H1 (cell line): ENCODE measurements at regions of chr1 and their contacts with region 1.

Region 1: GRCh38 chr1:172713466-172713865 is 54.6 kb downstream of the FASLG start:
- DNase-seq: no peak
- H3K4me3 ChIP-seq: no peak overlapping the region
- H3K27ac ChIP-seq: no peak overlapping the region
- H3K4me1 ChIP-seq: peaks cover 0 to 5% (median 0%) of the 10 kb centered on the region in 4 experiments; a peak in 1 of 7 replicates
- H3K27me3 ChIP-seq: no peaks in the 10 kb centered on the region
- CTCF ChIP-seq: no peak
- EP300 ChIP-seq: no peak
- POLR2A ChIP-seq: no peak
- RAD21 ChIP-seq: no peak

Region 2: GRCh38 chr1:172609528-172609927 is 103.9 kb before region 1 on chr1:
- CTCF ChIA-PET with region 1: interaction called, 96 read pairs
- POLR2A ChIA-PET with region 1: no interaction called
- DNase-seq: no peak
- H3K4me3 ChIP-seq: no peak overlapping the region
- H3K27ac ChIP-seq: no peak overlapping the region
- H3K4me1 ChIP-seq: no peaks in the 10 kb centered on the region
- H3K27me3 ChIP-seq: no peaks in the 10 kb centered on the region
- CTCF ChIP-seq: peak in 2 of 3 experiments; percentile 20 to 27; a peak in 2 of 4 replicates
- EP300 ChIP-seq: no peak
- POLR2A ChIP-seq: no peak
- RAD21 ChIP-seq: peak; percentile 28 to 43

Region 3: DNA sequence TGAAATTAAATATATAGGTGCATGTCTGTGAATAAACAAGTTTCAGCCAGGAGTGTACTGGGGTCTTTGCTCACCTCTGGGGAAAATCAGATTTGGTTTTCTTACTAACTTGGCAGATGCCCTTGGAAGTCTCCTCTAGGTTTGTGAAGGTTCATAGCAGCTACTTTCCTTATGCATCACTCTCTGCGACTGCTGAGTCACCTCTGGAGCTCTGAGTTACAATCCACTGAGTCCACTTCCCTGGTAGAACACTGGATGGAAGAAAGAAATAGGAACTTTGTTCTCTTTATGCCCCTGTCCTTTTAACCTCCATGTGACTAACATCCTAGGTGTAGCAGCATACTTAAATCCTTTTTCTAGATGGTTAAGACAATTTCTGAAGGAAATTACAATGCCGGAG is 58.9 kb before region 1 on chr1:
- CTCF ChIA-PET with region 1: no interaction called
- POLR2A ChIA-PET with region 1: no interaction called
- DNase-seq: no peak
- H3K4me3 ChIP-seq: no peak overlapping the region
- H3K27ac ChIP-seq: no peak overlapping the region
- H3K4me1 ChIP-seq: no peaks in the 10 kb centered on the region
- H3K27me3 ChIP-seq: no peaks in the 10 kb centered on the region
- CTCF ChIP-seq: no peak
- EP300 ChIP-seq: no peak
- POLR2A ChIP-seq: no peak
- RAD21 ChIP-seq: no peak

Region 4: GRCh38 chr1:172674831-172675613 is 38.4 kb before region 1 on chr1:
- CTCF ChIA-PET with region 1: no interaction called
- POLR2A ChIA-PET with region 1: no interaction called
- DNase-seq: no peak
- H3K4me3 ChIP-seq: no peak overlapping the region
- H3K27ac ChIP-seq: no peak overlapping the region
- H3K4me1 ChIP-seq: peaks cover 0 to 10% (median 0%) of the 10 kb centered on the region in 4 experiments; a peak in 1 of 7 replicates
- H3K27me3 ChIP-seq: no peaks in the 10 kb centered on the region
- CTCF ChIP-seq: no peak
- EP300 ChIP-seq: no peak
- POLR2A ChIP-seq: no peak
- RAD21 ChIP-seq: no peak

Region 5: DNA sequence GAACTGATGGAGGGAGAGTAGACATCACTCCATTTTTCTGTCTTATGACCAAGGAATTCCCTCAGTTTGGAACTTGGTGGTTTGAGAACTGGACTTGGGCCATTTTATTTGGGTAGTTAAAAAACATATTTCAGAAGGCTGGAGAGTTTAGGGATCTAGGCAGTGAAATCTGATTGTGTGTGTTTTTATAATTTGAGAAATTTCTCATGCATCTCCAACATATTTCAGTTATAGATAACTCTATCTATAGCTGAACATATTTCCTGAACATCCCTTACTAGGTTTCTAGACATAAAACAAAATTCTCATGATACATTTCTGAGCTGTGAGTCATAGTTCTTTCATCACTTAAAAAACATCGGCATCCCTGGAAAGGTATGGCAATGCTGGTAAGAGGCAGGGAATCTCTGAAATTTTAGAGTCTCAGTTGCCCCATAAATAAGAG is 48.1 kb after region 1 on chr1:
- CTCF ChIA-PET with region 1: no interaction called
- POLR2A ChIA-PET with region 1: no interaction called
- DNase-seq: no peak
- H3K4me3 ChIP-seq: no peak overlapping the region
- H3K27ac ChIP-seq: no peak overlapping the region
- H3K4me1 ChIP-seq: no peaks in the 10 kb centered on the region
- H3K27me3 ChIP-seq: no peaks in the 10 kb centered on the region
- CTCF ChIP-seq: no peak
- EP300 ChIP-seq: no peak
- POLR2A ChIP-seq: no peak
- RAD21 ChIP-seq: no peak

Region 6: GRCh38 chr1:172818841-172819527 is 105.5 kb after region 1 on chr1:
- CTCF ChIA-PET with region 1: no interaction called
- POLR2A ChIA-PET with region 1: no interaction called
- DNase-seq: no peak
- H3K4me3 ChIP-seq: no peak overlapping the region
- H3K27ac ChIP-seq: no peak overlapping the region
- H3K4me1 ChIP-seq: no peaks in the 10 kb centered on the region
- H3K27me3 ChIP-seq: no peaks in the 10 kb centered on the region
- CTCF ChIP-seq: no peak
- EP300 ChIP-seq: no peak
- POLR2A ChIP-seq: no peak
- RAD21 ChIP-seq: no peak